Activated CD4-positive, alpha-beta T cell treated with anti-CD3 and anti-CD28 coated beads, Interleukin-2, amount 10 ng/mL, durations not matched to agents 7 days and 5 days (primary cell): ENCODE measurements at regions of chr2 and their contacts with region 1.

Region 1: GRCh38 chr2:203238704-203239526 is at the start of gene CYP20A1:
- DNase-seq: peak; percentile 96
- H3K4me3 Mint-ChIP-seq: peak within 1 kb of the TSS; percentile 92
- H3K27ac Mint-ChIP-seq: peak within 1 kb of the TSS; percentile 100
- H3K4me1 Mint-ChIP-seq: peaks cover 34% of the 10 kb centered on the region
- H3K27me3 Mint-ChIP-seq: no peaks in the 10 kb centered on the region
- total RNA-seq, gene CYP20A1: 27.1 to 29.3 TPM

Region 2: GRCh38 chr2:203225423-203226039 is 13.4 kb before region 1 on chr2:
- CTCF ChIA-PET with region 1: interaction called, 12 read pairs
- POLR2A ChIA-PET with region 1: interaction called, 3 read pairs
- DNase-seq: peak; percentile 33
- H3K4me3 Mint-ChIP-seq: no peak overlapping the region
- H3K27ac Mint-ChIP-seq: no peak overlapping the region
- H3K4me1 Mint-ChIP-seq: no peaks in the 10 kb centered on the region
- H3K27me3 Mint-ChIP-seq: no peaks in the 10 kb centered on the region